CD14-positive monocyte (primary cell): ENCODE measurements at regions of chr11 and their contacts with region 1.

Region 1: DNA sequence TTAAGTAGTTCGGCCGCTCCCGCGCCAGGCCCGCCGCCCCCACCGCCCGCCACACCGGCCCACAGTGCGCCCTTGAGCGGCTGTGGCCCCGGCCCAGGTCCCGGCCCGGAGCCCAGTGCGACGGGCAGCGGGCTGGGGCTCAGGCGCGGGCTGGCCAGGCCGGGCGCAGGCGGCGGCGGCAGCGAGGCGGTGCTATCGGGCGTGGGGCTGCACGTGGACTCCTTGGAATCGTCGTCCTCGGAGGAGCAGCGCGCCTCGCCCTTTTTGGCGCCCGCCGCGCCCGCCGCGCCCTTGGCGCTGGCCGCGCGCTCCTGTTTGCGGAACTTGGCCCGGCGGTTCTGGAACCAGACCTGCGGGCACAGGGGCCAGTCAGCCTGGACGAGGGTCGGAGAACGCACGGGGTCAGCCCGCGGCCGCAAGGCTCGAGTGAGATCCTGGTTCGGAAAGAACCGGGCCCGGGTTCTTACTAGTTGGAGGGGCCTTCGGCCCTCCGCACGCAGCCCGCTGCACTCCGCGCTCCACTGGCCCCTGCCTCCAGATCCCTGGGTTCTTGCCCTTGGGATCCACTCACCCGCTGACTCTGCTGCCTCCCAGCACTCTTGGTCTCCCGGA is 4.0 kb downstream of the PHOX2A start:
- DNase-seq: peak; percentile 55 to 63 (median 55)
- H3K4me3 ChIP-seq: peak overlapping the region in 2 of 3 experiments; percentile 10 to 71
- H3K4me3 Mint-ChIP-seq: peak overlapping the region; percentile 72 to 94
- H3K27ac ChIP-seq: no peak overlapping the region
- H3K27ac Mint-ChIP-seq: peak overlapping the region in 2 of 7 donors; percentile 30 to 77
- H3K4me1 ChIP-seq: peaks cover 26 to 37% of the 10 kb centered on the region in 2 donors
- H3K4me1 Mint-ChIP-seq: peaks cover 46% of the 10 kb centered on the region
- H3K27me3 ChIP-seq: peaks cover 41 to 60% of the 10 kb centered on the region in 2 donors
- H3K27me3 Mint-ChIP-seq: peaks cover 52 to 60% (median 55%) of the 10 kb centered on the region in 3 donors
- CTCF ChIP-seq: no peak

Region 2: GRCh38 chr11:72080256-72080974 is 159.5 kb before region 1 on chr11 and contains the starts of genes LRRC51 and NUMA1:
- intact Hi-C with region 1: no loop called
- DNase-seq: peak; percentile 100
- H3K4me3 ChIP-seq: peak within 1 kb of the TSS; percentile 69 to 98 (median 72)
- H3K4me3 Mint-ChIP-seq: peak within 1 kb of the TSS; percentile 84 to 98
- H3K27ac ChIP-seq: peak within 1 kb of the TSS; percentile 53 to 82
- H3K27ac Mint-ChIP-seq: peak within 1 kb of the TSS; percentile 96 to 100 (median 98)
- H3K4me1 ChIP-seq: peaks cover 36 to 66% of the 10 kb centered on the region in 2 donors
- H3K4me1 Mint-ChIP-seq: peaks cover 48% of the 10 kb centered on the region
- H3K27me3 ChIP-seq: no peaks in the 10 kb centered on the region
- H3K27me3 Mint-ChIP-seq: no peaks in the 10 kb centered on the region
- CTCF ChIP-seq: no peak
- polyA plus RNA-seq, gene LRRC51: 1.3 to 1.9 (median 1.6) TPM
- polyA plus RNA-seq, gene NUMA1: 4.1 to 91.2 (median 12.4) TPM

Region 3: DNA sequence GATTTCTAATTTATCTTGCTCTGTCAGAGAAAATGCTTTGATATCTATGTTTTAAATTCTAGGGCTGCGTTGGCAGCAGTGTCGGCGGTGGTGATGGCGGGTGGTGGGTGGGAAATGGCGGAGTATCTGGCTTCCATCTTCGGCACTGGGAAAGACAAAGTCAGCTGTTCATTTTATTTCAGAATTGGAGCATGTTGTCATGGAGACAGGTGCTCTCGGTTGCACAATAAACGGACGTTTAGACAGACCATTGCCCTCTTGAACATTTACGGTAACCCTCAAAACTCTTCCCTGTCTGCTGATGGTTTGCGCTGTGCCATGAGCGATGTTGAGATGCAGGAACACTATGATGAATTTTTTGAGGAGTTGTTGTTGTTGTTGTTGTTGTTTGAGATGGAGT is 40.1 kb after region 1 on chr11:
- intact Hi-C with region 1: loop called in 1 of 2 experiments (anchors 5 kb)
- DNase-seq: no peak
- H3K4me3 ChIP-seq: no peak overlapping the region
- H3K4me3 Mint-ChIP-seq: no peak overlapping the region
- H3K27ac ChIP-seq: no peak overlapping the region
- H3K27ac Mint-ChIP-seq: no peak overlapping the region
- H3K4me1 ChIP-seq: no peaks in the 10 kb centered on the region
- H3K4me1 Mint-ChIP-seq: peaks cover 6% of the 10 kb centered on the region
- H3K27me3 ChIP-seq: peaks cover 7 to 15% of the 10 kb centered on the region in 2 donors
- H3K27me3 Mint-ChIP-seq: peaks cover 11 to 30% (median 13%) of the 10 kb centered on the region in 3 donors
- CTCF ChIP-seq: no peak

Region 4: GRCh38 chr11:72314600-72315392 is 74.8 kb after region 1 on chr11:
- intact Hi-C with region 1: no loop called
- DNase-seq: no peak
- H3K4me3 ChIP-seq: no peak overlapping the region
- H3K4me3 Mint-ChIP-seq: no peak overlapping the region
- H3K27ac ChIP-seq: no peak overlapping the region
- H3K27ac Mint-ChIP-seq: peak overlapping the region in 2 of 7 donors; percentile 23 to 37
- H3K4me1 ChIP-seq: no peaks in the 10 kb centered on the region
- H3K4me1 Mint-ChIP-seq: no peaks in the 10 kb centered on the region
- H3K27me3 ChIP-seq: no peaks in the 10 kb centered on the region
- H3K27me3 Mint-ChIP-seq: no peaks in the 10 kb centered on the region
- CTCF ChIP-seq: no peak